Activated CD4-positive, alpha-beta T cell treated with anti-CD3 and anti-CD28 coated beads for 36 hours (primary cell): ENCODE measurements at regions of chr12 and their contacts with region 1.

Region 1: DNA sequence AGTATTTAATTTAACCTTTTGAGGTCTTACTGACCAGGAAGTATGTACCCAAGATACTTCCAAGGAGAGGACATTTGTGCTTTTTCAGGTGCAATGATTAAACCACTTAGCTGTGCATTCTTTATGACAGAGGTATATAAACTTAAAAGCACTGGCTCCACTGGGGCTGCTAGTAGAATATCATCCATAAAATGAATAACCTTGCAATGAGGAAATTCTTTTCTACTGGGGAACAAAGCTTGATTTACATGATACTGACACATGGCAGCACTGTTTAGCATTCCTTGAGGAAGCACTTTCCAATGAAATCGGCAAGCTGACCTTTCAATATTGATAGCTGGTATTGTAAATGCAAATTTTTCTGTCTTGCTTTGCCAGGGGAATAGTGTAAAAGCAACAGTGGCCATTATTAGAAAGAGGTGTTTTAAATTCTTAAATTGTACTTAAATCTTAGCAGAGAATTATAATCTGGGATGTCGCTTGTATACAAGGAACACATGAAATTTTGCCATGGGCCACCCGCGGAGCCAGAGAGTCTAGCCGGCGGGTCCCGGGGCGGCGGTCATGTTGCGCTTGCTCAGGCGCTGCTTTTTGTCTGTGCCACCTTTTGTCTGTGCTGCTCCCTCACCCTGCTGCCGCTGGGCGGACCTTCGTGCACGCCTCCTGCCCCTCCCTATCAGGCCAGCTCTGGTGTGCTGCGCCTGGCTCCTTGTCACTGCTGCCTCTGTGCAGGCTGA is 20.9 kb upstream of the BLTP3B start:
- DNase-seq: peak; percentile 85
- ATAC-seq: peak; percentile 100
- H3K4me3 Mint-ChIP-seq: peak overlapping the region; percentile 49
- H3K27ac Mint-ChIP-seq: no peak overlapping the region
- H3K4me1 Mint-ChIP-seq: peaks cover 10% of the 10 kb centered on the region
- H3K27me3 Mint-ChIP-seq: no peaks in the 10 kb centered on the region

Region 2: DNA sequence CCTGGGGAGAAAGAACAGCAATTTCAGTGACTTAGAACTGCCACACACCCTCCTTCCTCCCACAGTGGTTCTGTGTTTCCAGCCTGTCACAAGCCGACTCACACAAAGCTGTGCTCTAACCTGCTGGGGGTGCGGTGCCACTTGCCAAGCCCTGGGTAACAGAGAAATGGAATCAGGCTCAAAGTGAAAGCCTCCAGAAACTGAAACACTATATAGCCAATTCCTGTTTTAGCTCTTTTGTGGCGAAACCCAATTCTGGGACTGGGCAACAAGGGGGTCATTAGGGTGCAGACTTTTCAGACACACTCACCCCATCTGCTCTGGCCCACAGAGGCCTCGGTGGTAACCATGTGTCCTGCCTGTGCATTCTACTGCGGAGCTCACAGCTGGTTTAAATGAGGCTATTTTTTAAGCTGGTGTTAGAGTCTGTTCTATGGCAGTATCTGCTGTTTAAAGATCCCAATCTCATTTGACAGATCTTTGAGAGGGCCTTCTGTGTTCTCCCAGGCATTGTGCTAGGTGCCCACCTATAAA is 21.8 kb after region 1 on chr12:
- CTCF ChIA-PET with region 1: no interaction called
- POLR2A ChIA-PET with region 1: interaction called, 7 read pairs
- intact Hi-C with region 1: loop called in 1 of 2 experiments (anchors 2 kb)
- DNase-seq: peak; percentile 49
- ATAC-seq: peak; percentile 89
- H3K4me3 Mint-ChIP-seq: no peak overlapping the region
- H3K27ac Mint-ChIP-seq: no peak overlapping the region
- H3K4me1 Mint-ChIP-seq: peaks cover 5% of the 10 kb centered on the region
- H3K27me3 Mint-ChIP-seq: no peaks in the 10 kb centered on the region

Region 3: DNA sequence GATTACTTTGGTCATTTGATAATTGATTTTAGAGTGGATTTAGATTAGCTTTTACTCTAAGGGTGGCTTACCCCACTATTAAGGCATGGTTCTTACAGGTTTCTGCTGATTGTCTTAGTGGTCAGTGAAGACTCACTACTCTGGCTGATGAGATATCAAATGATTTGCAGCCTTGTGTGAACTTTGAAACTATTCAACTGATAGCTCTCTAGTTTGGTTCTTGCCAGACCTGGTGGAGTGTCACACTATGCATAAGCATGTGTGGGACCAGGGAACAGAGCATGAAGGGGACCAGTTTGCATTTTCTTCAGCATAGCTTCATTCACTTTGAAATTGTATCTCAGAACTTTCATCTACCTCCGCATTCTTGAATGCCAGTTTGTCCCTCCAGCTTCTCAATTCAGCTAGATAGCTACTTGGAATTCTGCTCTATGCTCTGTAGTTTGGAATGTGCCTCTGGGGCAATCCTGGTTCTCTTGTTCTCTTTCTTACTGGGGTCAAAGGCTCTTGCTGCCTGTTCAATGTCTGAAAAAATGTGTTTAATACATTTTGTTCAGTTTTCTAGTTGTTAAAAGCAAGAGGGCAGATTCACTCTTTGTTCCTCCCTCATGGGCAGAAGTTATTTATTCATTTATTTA is 116.1 kb after region 1 on chr12:
- CTCF ChIA-PET with region 1: no interaction called
- POLR2A ChIA-PET with region 1: no interaction called
- intact Hi-C with region 1: no loop called
- DNase-seq: no peak
- ATAC-seq: no peak
- H3K4me3 Mint-ChIP-seq: no peak overlapping the region
- H3K27ac Mint-ChIP-seq: no peak overlapping the region
- H3K4me1 Mint-ChIP-seq: peaks cover 18% of the 10 kb centered on the region
- H3K27me3 Mint-ChIP-seq: no peaks in the 10 kb centered on the region

Region 4: DNA sequence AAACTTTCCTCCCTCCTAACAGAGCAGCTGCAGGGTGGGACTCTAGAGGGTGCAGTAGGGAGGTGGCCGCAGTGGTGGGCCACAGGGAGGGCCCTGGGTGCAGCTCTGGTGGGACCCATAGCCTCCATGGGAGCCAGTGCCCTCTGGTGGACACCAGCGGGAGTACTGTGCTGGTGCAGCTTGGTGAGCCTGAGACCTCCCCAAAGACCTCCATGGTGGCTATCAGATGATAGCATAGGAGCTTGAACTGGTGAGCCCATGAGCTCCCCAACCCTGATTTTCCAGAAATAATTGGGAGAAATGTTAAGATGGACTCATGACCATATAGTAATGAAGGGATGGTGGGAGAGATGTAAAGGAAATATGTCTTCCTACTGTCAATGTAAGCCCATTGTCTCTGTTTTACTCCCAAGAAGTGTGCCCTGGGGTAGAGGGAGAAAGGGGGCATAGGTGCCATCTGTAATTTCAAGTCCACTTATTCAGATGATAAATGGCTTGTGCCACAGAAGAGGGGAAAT is 508.6 kb after region 1 on chr12:
- CTCF ChIA-PET with region 1: no interaction called
- POLR2A ChIA-PET with region 1: no interaction called
- intact Hi-C with region 1: no loop called
- DNase-seq: peak; percentile 60
- ATAC-seq: no peak
- H3K4me3 Mint-ChIP-seq: no peak overlapping the region
- H3K27ac Mint-ChIP-seq: no peak overlapping the region
- H3K4me1 Mint-ChIP-seq: no peaks in the 10 kb centered on the region
- H3K27me3 Mint-ChIP-seq: peaks cover 10% of the 10 kb centered on the region